Activated T-helper 1 cell treated with anti-CD3 and anti-CD28 coated beads, Interleukin-12 subunit alpha, Interleukin-12 subunit beta, Interleukin-2, Interleukin-4 antibody, amounts not matched to agents 30 ng/mL and 10 ng/mL and 1 ng/mL, durations not matched to agents 14 hours and 24 hours and 36 hours (primary cell): ENCODE measurements at regions of chr10 and their contacts with region 1.

Region 1: DNA sequence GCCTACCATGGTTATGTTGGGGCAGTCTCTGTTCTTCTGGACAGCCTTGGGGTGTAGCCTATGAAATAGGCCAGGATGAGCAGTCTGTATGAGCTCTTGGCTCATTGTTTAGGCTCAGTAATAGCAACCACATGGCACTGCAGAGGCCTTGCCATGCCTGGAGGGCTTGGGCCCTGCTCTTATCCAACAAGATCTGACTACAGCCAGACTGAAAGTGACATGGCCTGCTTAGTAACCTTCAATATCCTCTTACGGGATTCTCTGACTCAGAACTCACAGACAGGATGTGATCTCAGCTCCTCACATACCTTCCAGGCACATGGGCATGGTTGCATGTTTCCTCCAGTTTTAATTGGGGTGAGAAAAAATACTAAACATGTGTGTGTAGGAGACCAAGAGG is 289.3 kb downstream of the PTEN start:
- DNase-seq: peak; percentile 57
- H3K4me3 Mint-ChIP-seq: peak overlapping the region; percentile 54
- H3K27ac Mint-ChIP-seq: peak overlapping the region; percentile 97
- H3K4me1 Mint-ChIP-seq: peaks cover 37% of the 10 kb centered on the region
- H3K27me3 Mint-ChIP-seq: peaks cover 5% of the 10 kb centered on the region

Region 2: DNA sequence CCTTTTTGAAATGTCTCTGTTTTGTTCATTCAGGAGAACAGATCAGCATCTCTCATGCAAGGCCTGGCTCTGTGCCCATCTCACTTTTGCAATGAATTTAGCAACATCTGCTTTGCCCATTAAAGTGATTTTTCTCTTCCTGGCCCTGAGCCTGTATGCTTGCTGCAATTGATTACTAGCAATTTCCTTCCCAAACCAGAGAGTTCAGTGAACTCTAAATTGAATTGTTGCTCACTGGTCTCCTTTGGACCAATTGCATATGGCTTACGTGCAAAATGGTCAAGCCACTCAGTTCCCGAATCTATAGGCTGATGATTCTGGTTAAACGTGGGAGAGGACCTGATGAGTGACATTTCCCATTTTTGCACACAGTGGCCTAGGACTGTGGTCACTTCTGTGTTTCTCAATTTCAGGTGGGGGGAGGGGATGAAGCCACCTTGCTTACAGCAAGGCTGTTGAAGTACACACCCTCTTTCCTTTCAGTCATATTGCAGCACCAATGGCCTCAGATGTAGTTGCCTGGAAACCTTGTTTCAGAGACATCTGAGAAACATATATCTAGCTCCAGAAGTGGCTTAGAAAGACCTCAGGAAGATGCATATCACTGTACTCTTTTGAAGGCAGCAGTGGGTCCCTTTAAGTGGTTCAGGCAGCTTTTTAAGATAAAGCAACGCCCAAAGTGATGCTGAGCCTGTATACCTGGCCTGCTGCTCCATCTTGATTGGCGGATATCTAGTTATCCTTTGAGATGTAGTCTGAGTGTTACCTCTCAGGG is 87.9 kb before region 1 on chr10:
- intact Hi-C with region 1: loop called (anchors 1 kb)
- DNase-seq: peak; percentile 11
- H3K4me3 Mint-ChIP-seq: no peak overlapping the region
- H3K27ac Mint-ChIP-seq: peak overlapping the region; percentile 66
- H3K4me1 Mint-ChIP-seq: peaks cover 60% of the 10 kb centered on the region
- H3K27me3 Mint-ChIP-seq: no peaks in the 10 kb centered on the region

Region 3: DNA sequence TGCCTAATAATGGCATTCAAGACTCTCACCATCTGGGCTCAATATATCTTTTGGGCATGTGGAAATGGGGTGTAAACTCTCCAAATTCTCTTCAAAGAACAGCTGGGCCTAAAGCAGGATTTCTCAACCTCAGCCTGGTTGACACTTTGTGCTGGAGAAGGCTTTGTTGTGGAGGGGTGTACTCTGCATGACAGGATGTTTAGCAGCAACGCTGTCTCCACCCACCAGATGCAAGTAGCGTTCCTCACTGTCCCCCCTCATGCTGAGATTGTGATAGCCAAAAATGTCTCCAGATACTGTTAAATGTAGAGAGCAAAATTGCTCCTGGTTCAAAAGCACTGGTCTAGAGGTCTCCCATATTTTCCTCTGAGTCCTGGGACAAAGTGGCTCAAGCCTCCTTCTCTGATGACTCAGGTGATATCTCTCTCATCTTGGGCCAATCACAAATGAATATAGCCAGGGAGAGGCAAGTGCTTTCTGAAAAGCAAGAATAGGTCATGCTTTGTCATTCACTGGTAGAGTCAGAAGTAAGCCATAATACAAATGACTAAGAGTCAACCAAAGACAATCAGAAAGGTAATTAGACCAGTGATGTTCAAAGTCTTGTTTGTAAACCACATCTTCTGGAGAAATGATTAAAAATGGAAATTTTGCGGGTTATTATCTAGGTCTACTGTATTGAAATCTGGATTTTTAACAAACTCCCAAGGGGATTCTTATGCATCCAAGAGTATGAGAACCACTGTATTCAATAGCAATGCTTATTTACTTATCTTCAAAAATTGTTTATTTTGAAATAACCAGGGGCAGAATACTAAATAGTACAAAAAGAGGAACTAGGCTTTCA is 41.5 kb after region 1 on chr10:
- intact Hi-C with region 1: loop called (anchors 1 kb)
- DNase-seq: peak; percentile 47
- H3K4me3 Mint-ChIP-seq: peak overlapping the region; percentile 43
- H3K27ac Mint-ChIP-seq: peak overlapping the region; percentile 90
- H3K4me1 Mint-ChIP-seq: peaks cover 35% of the 10 kb centered on the region
- H3K27me3 Mint-ChIP-seq: peaks cover 3% of the 10 kb centered on the region